GM18951 (cell line): ENCODE measurements at regions of chr5 and their contacts with region 1.

Region 1: GRCh38 chr5:88746438-88746882 is 136.5 kb downstream of the MEF2C start:
- POLR2A ChIP-seq: no peak

Region 2: DNA sequence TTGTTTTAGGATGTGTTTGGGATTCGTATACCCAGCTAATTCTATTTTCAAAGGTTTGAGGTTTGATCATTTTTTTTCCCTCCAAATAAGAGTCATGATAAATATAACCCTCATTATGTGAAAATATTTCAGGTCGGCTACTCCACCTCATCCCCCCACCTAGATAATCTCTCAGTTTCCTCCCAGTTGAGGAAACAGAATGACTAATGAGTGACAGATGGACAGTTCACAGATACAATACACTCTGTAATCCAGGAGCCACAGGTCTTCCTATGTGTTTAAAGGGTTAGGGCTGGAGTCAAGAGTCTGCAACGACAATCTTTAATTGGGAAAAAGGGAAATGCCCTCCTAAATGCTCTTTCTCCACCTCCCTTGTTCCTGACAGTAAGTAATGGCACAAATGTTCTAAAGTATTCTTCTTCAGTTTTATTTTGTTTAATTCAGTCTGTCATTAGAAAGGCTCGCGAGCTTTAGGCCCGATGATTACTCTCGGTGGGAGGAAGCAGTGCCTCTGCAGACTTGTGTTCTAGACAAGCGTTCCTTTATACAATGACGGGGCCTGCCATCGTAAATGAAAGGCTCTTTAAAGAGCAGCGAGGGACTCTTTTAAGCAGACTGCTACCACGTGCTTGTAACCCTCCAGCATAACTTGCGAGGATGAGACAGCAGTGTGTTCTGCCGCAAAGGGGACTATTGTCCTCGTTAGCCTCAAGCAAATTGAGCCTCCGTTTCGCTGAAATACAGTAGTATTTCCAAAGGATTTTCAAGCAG is 67.5 kb after region 1 on chr5:
- in situ Hi-C with region 1: loop called (anchors 10 kb)
- POLR2A ChIP-seq: no peak